Esophagus muscularis mucosa (tissue), 4 donors: ENCODE measurements at regions of chr17 and their contacts with region 1.

Region 1: GRCh38 chr17:81471804-81472456 is 40.7 kb downstream of the ACTG1 start:
- DNase-seq: no peak
- H3K4me3 ChIP-seq: peak overlapping the region in 2 of 4 donors; percentile 6 to 39
- H3K27ac ChIP-seq: peak overlapping the region in 2 of 4 donors; percentile 27 to 31
- H3K4me1 ChIP-seq: peaks cover 0 to 12% (median 1%) of the 10 kb centered on the region in 4 donors
- H3K27me3 ChIP-seq: no peaks in the 10 kb centered on the region
- CTCF ChIP-seq: peak in 2 of 3 experiments; percentile 27 to 28
- EP300 ChIP-seq: no peak
- POLR2A ChIP-seq: no peak

Region 2: DNA sequence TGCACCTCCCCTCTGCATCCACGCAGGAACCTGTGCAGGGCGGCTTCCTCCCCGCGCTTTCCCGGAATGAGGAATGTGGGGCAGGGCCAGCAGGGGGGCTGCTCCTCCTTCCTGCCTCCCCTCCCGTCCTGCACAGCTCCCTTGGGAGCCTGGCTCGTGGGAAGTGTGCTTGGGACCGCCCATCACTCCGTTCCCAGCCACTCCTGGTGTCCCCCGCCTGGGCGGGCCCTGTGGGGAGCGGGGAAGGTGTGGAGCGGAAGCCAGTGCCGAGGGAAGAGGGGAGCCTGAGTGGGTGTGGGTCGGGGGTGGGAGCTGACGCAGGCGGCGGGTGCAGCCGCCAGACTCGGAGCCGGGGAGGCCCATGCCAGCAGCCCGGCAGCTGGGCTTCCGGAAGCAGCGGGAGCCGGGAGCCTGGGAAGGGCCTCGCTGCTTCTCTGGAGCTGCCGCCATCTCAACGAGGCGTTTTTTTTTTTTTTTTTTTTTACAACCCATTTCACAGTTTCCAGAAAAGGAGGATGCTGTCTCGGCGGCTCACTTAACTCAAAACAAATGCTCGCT is 52.5 kb before region 1 on chr17:
- intact Hi-C with region 1: no loop called
- DNase-seq: peak; percentile 97
- H3K4me3 ChIP-seq: peak overlapping the region; percentile 37 to 55 (median 46)
- H3K27ac ChIP-seq: peak overlapping the region; percentile 86 to 99 (median 96)
- H3K4me1 ChIP-seq: peaks cover 76 to 93% (median 86%) of the 10 kb centered on the region in 4 donors
- H3K27me3 ChIP-seq: no peaks in the 10 kb centered on the region
- CTCF ChIP-seq: no peak
- EP300 ChIP-seq: peak; percentile 86
- POLR2A ChIP-seq: peak; percentile 42

Region 3: GRCh38 chr17:81436294-81436849 is 35.6 kb before region 1 on chr17:
- intact Hi-C with region 1: loop called (anchors 5 kb)
- DNase-seq: no peak
- H3K4me3 ChIP-seq: no peak overlapping the region
- H3K27ac ChIP-seq: peak overlapping the region; percentile 55 to 76 (median 74)
- H3K4me1 ChIP-seq: peaks cover 41 to 62% (median 57%) of the 10 kb centered on the region in 4 donors
- H3K27me3 ChIP-seq: no peaks in the 10 kb centered on the region
- CTCF ChIP-seq: no peak
- EP300 ChIP-seq: no peak
- POLR2A ChIP-seq: no peak